B cell (primary cell): ENCODE measurements at regions of chr21 and their contacts with region 1.

Region 1: DNA sequence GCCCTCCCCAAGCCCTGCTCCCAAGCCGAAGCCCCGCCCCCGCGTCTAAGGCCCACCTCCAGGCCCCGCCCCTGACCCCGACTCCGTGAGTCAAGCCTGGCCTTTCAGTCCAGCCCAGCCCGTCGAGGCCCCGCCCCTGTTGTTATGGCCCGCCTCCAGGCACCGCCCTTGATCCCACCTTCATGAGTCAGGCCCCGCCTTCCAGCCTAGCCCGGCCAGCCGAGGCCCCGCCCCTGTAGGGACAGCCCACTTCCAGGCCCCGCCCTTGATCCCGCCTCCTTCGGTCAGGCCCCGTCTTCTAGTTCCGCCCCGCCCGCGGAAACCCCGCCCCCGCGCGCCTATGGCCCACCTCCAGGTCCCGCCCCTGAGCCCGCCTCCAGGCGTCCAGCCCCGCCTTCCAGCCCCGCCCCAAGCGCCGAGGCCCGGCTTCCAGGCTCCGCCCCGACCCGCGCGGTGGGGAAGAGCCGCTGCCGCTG is 247 bp upstream of the DOP1B start:
- DNase-seq: peak; percentile 100
- ATAC-seq: peak; percentile 88
- H3K4me3 ChIP-seq: peak overlapping the region in 4 of 5 experiments; percentile 63 to 88 (median 80)
- H3K4me3 Mint-ChIP-seq: peak overlapping the region; percentile 86
- H3K27ac ChIP-seq: peak overlapping the region; percentile 81 to 85
- H3K27ac Mint-ChIP-seq: peak overlapping the region; percentile 78
- H3K4me1 ChIP-seq: peaks cover 14 to 30% of the 10 kb centered on the region in 2 donors
- H3K4me1 Mint-ChIP-seq: peaks cover 35% of the 10 kb centered on the region
- H3K27me3 ChIP-seq: no peaks in the 10 kb centered on the region
- H3K27me3 Mint-ChIP-seq: no peaks in the 10 kb centered on the region
- CTCF ChIP-seq: no peak

Region 2: DNA sequence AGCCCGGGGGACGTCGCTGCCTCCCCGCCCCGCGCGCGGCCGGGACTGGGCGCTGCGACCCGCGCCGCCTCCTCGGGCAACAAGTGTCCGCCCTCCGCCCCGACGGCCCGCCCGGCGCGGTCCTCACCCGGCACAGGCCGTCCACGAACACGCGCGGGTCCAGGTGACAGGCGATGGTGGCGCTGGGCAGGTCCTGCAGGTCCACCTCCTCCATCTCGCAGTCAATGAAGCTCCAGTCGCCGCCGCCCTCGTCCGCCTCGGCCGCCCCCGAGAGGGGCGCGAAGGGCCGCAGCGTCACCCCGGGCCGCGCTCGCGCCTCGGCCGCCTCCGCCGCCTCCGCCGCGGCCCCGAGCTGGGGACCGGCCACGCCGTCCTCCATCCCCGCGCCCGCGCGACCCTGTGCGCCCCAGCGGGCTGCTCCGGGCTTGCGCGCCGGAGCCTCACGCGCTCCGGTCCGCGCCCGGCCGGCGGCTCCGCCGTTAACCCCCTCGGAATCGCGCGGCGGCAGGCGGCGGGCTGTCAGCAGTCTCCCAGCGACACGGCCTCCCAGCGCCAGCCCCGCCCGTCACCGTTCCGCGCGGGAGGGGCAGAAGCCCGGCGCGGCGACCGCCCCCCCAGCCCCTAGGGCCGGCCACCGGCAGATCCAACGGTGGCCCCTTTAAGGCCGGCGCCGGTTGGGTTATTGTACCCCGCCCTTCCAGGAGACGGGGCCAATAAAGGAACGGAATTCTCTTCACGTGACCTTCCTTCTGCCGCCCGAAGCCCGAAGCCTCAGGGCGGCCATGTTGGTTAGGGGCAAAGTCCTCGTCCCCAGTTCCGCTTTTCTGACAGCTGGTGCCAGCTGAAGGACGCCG is 1541.5 kb before region 1 on chr21 and contains the start of gene RCAN1:
- CTCF ChIA-PET with region 1: no interaction called
- POLR2A ChIA-PET with region 1: no interaction called
- intact Hi-C with region 1: loop called (anchors 10 kb)
- DNase-seq: peak; percentile 94
- ATAC-seq: peak; percentile 95
- H3K4me3 ChIP-seq: peak within 1 kb of the TSS; percentile 41 to 74 (median 59)
- H3K4me3 Mint-ChIP-seq: peak within 1 kb of the TSS; percentile 91
- H3K27ac ChIP-seq: peak within 1 kb of the TSS in 1 of 2 donors; percentile 71
- H3K27ac Mint-ChIP-seq: peak within 1 kb of the TSS; percentile 84
- H3K4me1 ChIP-seq: peaks cover 9 to 11% of the 10 kb centered on the region in 2 donors
- H3K4me1 Mint-ChIP-seq: peaks cover 16% of the 10 kb centered on the region
- H3K27me3 ChIP-seq: peaks cover 0 to 7% (median 0%) of the 10 kb centered on the region in 4 experiments
- H3K27me3 Mint-ChIP-seq: peaks cover 15% of the 10 kb centered on the region
- CTCF ChIP-seq: no peak
- total RNA-seq, gene RCAN1: 4.2 and 4.4 TPM in 2 replicates

Region 3: DNA sequence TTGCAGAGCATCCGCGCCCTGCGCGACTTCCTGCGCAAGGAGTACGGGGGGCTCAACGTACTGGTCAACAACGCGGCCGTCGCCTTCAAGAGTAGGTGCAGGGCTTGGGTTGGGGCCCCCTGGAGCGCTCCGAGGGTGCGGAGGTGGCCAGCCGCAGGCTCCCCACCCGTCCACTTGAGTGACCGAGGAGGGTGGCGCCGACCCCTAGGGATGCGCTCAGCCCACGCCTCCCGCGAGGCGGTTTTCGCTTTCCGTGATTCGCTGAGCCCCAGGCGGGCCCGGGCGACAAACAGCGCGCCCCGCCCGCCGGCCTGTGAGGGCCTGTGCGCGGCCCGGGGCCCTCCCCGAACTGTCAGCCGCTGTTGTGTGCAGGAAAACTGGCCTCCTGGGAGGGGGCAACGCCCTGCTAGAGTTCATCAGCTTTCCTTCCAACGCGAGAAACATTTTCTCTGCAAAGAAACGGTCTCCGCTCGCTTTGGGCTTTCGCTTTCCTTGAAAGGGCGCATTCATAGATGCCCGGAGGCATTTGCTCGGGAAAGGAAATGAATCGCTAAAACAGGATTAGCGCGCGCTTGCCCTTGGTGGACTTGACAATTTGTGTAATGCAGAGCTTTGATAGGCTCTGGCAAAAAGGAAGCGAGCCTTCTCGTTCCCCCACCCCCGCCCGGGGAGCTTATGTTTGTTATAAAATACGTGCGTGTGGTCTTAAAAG is 20.8 kb before region 1 on chr21:
- CTCF ChIA-PET with region 1: interaction called, 64 read pairs
- POLR2A ChIA-PET with region 1: interaction called, 4 read pairs
- intact Hi-C with region 1: loop called (anchors 1 kb)
- DNase-seq: peak; percentile 74
- ATAC-seq: peak; percentile 86
- H3K4me3 ChIP-seq: peak overlapping the region; percentile 71 to 89 (median 76)
- H3K4me3 Mint-ChIP-seq: peak overlapping the region; percentile 90
- H3K27ac ChIP-seq: peak overlapping the region; percentile 41 to 62
- H3K27ac Mint-ChIP-seq: peak overlapping the region; percentile 90
- H3K4me1 ChIP-seq: peaks cover 20 to 27% of the 10 kb centered on the region in 2 donors
- H3K4me1 Mint-ChIP-seq: peaks cover 33% of the 10 kb centered on the region
- H3K27me3 ChIP-seq: peaks cover 0 to 3% (median 0%) of the 10 kb centered on the region in 4 experiments
- H3K27me3 Mint-ChIP-seq: no peaks in the 10 kb centered on the region
- CTCF ChIP-seq: no peak

Region 4: DNA sequence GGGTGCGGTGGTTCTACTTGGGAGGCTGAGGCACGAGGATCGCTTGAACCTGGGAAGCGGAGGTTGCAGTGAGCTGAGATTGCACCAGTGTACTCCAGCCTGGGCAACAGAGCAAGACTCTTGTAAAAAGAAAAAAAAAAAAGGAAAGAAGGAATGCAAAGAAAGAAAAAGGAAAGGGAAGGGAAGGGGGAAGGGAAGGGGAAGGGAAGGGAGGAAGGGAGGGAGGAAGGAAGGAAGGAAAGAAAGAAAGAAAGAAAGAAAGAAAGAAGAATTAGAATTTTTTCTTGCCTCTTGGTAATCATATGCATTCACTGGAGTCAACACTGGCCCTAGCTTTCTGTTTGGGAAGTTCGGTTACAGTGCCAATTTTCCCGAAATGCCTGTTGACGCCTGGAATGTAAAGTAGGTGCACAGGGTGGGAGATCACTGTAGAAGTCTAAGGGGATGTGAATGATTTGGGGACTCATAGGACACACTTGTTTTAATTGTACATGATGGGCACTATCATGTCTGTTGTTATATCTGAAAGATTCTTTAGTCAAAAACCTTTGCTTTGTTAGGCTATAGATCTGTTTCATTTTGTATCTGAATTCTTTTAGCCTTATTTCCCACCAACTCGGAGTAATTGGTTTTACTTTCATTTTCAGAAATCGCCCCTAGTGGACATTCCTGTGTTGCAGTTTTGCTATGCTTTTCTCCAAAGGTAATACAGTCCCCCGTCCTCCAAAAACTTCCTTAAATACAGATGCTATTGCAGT is 103.8 kb after region 1 on chr21:
- CTCF ChIA-PET with region 1: no interaction called
- POLR2A ChIA-PET with region 1: no interaction called
- intact Hi-C with region 1: loop called (anchors 1 kb)
- DNase-seq: peak; percentile 78
- ATAC-seq: peak; percentile 44
- H3K4me3 ChIP-seq: peak overlapping the region; percentile 21 to 71 (median 34)
- H3K4me3 Mint-ChIP-seq: peak overlapping the region; percentile 86
- H3K27ac ChIP-seq: peak overlapping the region; percentile 68 to 77
- H3K27ac Mint-ChIP-seq: peak overlapping the region; percentile 94
- H3K4me1 ChIP-seq: peaks cover 81 to 90% of the 10 kb centered on the region in 2 donors
- H3K4me1 Mint-ChIP-seq: peaks cover 73% of the 10 kb centered on the region
- H3K27me3 ChIP-seq: no peaks in the 10 kb centered on the region
- H3K27me3 Mint-ChIP-seq: no peaks in the 10 kb centered on the region
- CTCF ChIP-seq: peak; percentile 82

Region 5: DNA sequence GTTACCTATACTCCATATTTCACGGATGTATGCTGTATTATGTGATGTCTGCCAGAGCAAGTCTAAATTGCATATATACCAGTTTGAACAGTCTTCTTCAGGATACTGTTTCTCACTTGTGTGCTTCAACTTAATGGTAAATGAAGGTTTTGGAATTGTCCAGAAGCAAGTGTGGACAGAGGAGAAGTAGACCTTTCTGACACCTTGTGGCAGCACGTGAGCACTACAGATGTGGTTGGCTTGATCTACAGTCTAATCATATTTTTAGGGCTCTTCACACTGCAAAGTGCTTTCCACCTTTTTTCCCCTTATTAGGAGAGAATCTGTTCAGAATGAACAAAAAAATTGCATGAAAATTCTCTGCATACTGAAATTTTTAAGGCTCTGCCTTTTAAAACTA is 174.5 kb after region 1 on chr21:
- CTCF ChIA-PET with region 1: interaction called, 26 read pairs
- POLR2A ChIA-PET with region 1: interaction called, 3 read pairs
- intact Hi-C with region 1: loop called (anchors 1 kb)
- DNase-seq: peak; percentile 75
- ATAC-seq: peak; percentile 92
- H3K4me3 ChIP-seq: no peak overlapping the region
- H3K4me3 Mint-ChIP-seq: peak overlapping the region; percentile 37
- H3K27ac ChIP-seq: peak overlapping the region in 1 of 2 donors; percentile 73
- H3K27ac Mint-ChIP-seq: peak overlapping the region; percentile 65
- H3K4me1 ChIP-seq: peaks cover 32 to 40% of the 10 kb centered on the region in 2 donors
- H3K4me1 Mint-ChIP-seq: peaks cover 41% of the 10 kb centered on the region
- H3K27me3 ChIP-seq: no peaks in the 10 kb centered on the region
- H3K27me3 Mint-ChIP-seq: no peaks in the 10 kb centered on the region
- CTCF ChIP-seq: peak; percentile 84

Region 6: DNA sequence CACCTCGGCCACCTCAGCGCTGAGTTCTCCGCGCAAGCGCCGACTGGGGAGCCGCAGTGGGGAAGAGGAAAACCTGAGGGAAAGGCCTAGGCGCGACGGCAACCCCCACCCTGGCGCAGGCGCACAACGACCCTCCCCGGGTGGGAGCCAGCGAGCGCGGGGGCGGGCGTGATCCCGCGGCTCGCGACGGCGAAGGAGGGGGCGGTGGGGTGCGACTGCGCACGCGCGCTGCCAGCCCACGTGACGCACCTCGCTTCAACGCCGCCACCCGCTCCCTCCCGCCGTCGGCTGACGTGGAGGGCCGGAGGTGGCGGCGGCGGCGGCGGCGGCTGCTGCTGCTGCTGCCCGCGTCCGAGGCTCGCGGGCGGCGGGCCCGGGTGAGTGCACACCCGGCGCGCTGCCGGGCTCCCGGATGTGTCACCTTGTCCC is 916.6 kb after region 1 on chr21 and contains the starts of genes PIGP and TTC3:
- CTCF ChIA-PET with region 1: no interaction called
- POLR2A ChIA-PET with region 1: no interaction called
- intact Hi-C with region 1: loop called (anchors 10 kb)
- DNase-seq: peak; percentile 98
- ATAC-seq: peak; percentile 67
- H3K4me3 ChIP-seq: peak within 1 kb of the TSS; percentile 80 to 92 (median 86)
- H3K4me3 Mint-ChIP-seq: peak within 1 kb of the TSS; percentile 98
- H3K27ac ChIP-seq: peak within 1 kb of the TSS; percentile 98
- H3K27ac Mint-ChIP-seq: peak within 1 kb of the TSS; percentile 99
- H3K4me1 ChIP-seq: peaks cover 22 to 23% of the 10 kb centered on the region in 2 donors
- H3K4me1 Mint-ChIP-seq: peaks cover 46% of the 10 kb centered on the region
- H3K27me3 ChIP-seq: no peaks in the 10 kb centered on the region
- H3K27me3 Mint-ChIP-seq: no peaks in the 10 kb centered on the region
- CTCF ChIP-seq: no peak
- total RNA-seq, gene PIGP: 21.7 and 22.7 TPM in 2 replicates
- total RNA-seq, gene TTC3: 163 and 191 TPM in 2 replicates